IMR-90 (cell line): ENCODE measurements at regions of chr16 and their contacts with region 1.

Region 1: GRCh38 chr16:19886073-19886941 is 1.7 kb upstream of the GPRC5B start:
- DNase-seq: peak; percentile 75
- ATAC-seq: peak; percentile 62
- H3K4me3 ChIP-seq: no peak overlapping the region; the same call in 1 of the 2 replicates
- H3K27ac ChIP-seq: no peak overlapping the region
- H3K4me1 ChIP-seq: peaks cover 5% of the 10 kb centered on the region; the same call in 1 of the 2 replicates
- H3K27me3 ChIP-seq: peaks cover 14% of the 10 kb centered on the region
- CTCF ChIP-seq: peak; percentile 99
- POLR2A ChIP-seq: peak; percentile 60
- RAD21 ChIP-seq: peak; percentile 100

Region 2: GRCh38 chr16:19113453-19114351 is 772.6 kb before region 1 on chr16 and contains the start of gene ITPRIPL2:
- CTCF ChIA-PET with region 1: no interaction called
- POLR2A ChIA-PET with region 1: no interaction called
- dilution Hi-C with region 1: no loop called
- in situ Hi-C with region 1: loop called (anchors 25 kb)
- intact Hi-C with region 1: no loop called
- DNase-seq: peak; percentile 85
- ATAC-seq: peak; percentile 88
- H3K4me3 ChIP-seq: peak within 1 kb of the TSS; percentile 69
- H3K27ac ChIP-seq: peak within 1 kb of the TSS; percentile 95
- H3K4me1 ChIP-seq: peaks cover 26% of the 10 kb centered on the region
- H3K27me3 ChIP-seq: no peaks in the 10 kb centered on the region
- CTCF ChIP-seq: no peak
- POLR2A ChIP-seq: peak; percentile 77
- RAD21 ChIP-seq: no peak
- total RNA-seq, gene ITPRIPL2: 11.1 and 15.0 TPM in 2 replicates

Region 3: GRCh38 chr16:19601083-19601976 is 285.0 kb before region 1 on chr16:
- CTCF ChIA-PET with region 1: interaction called, 5 read pairs
- POLR2A ChIA-PET with region 1: no interaction called
- dilution Hi-C with region 1: loop called (anchors 25 kb)
- in situ Hi-C with region 1: loop called (anchors 5 kb)
- intact Hi-C with region 1: loop called (anchors 1 kb)
- DNase-seq: peak; percentile 36
- ATAC-seq: peak; percentile 57
- H3K4me3 ChIP-seq: no peak overlapping the region
- H3K27ac ChIP-seq: no peak overlapping the region
- H3K4me1 ChIP-seq: no peaks in the 10 kb centered on the region
- H3K27me3 ChIP-seq: no peaks in the 10 kb centered on the region
- CTCF ChIP-seq: peak; percentile 67
- POLR2A ChIP-seq: no peak
- RAD21 ChIP-seq: peak; percentile 75

Region 4: DNA sequence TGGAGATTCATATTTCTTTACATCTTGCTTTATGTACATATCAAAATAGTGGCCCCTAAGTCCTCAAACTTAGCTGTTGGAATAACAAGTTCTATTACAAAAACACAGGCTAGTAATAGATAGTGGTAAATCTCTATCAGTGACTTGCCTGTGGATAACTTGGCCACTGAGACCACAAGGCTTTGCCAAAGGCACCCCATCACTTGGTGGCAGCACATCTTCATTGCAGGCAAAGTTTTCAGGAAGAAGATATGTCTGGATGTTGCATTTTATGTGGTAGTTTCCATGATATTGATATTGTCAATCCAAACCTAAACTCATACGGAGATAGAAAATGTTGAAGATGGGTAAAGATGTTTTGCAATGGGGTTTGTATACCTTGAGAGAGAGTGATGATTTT is 226.8 kb before region 1 on chr16:
- CTCF ChIA-PET with region 1: no interaction called
- POLR2A ChIA-PET with region 1: no interaction called
- dilution Hi-C with region 1: no loop called
- in situ Hi-C with region 1: no loop called
- intact Hi-C with region 1: loop called (anchors 5 kb)
- DNase-seq: peak; percentile 8
- ATAC-seq: no peak
- H3K4me3 ChIP-seq: no peak overlapping the region
- H3K27ac ChIP-seq: no peak overlapping the region
- H3K4me1 ChIP-seq: no peaks in the 10 kb centered on the region
- H3K27me3 ChIP-seq: no peaks in the 10 kb centered on the region
- CTCF ChIP-seq: no peak
- POLR2A ChIP-seq: no peak
- RAD21 ChIP-seq: peak; percentile 23; the same call in 1 of the 2 replicates

Region 5: DNA sequence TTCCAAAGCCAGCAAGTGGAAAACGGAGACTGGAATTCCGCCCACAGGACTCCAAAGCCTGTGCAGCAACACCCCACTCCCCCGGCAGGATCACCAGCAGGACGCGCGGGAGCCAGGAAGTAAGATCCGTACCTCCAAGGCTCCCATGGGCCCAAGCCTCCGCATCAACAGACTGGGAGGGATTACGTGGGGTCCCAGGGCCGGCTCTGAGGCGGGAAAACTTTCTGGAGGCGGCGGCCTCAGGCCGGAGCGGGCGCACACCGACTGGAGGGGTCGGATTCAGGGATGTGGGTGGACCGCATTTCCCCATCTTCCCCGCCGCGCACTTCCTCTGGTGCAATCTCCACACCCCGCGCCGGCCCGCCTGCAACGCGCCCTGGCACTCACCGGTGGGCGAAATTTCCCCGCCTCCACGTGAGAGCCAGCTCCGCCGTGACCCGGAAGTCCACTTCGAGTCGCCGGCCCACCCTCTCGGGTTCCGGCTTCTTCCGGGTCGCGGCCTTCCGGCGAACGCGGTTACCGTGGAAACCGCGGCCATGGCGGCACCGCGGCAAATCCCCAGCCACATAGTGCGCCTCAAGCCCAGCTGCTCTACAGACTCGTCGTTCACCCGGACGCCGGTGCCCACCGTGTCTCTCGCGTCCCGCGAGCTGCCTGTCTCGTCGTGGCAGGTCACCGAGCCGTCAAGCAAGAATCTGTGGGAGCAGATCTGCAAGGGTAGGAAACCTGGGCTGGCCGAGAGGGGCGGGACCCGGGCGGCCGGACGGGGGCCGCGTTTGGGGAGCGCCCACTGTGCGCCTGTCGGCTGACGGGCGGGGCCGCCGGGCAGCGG is 168.3 kb before region 1 on chr16 and contains the starts of genes IQCK and KNOP1:
- CTCF ChIA-PET with region 1: no interaction called
- POLR2A ChIA-PET with region 1: interaction called, 7 read pairs
- dilution Hi-C with region 1: no loop called
- in situ Hi-C with region 1: loop called (anchors 5 kb)
- intact Hi-C with region 1: loop called (anchors 1 kb)
- DNase-seq: peak; percentile 87
- ATAC-seq: peak; percentile 92
- H3K4me3 ChIP-seq: peak within 1 kb of the TSS; percentile 97
- H3K27ac ChIP-seq: peak within 1 kb of the TSS; percentile 86
- H3K4me1 ChIP-seq: peaks cover 6% of the 10 kb centered on the region; the same call in 1 of the 2 replicates
- H3K27me3 ChIP-seq: no peaks in the 10 kb centered on the region
- CTCF ChIP-seq: 0 out of 2 replicates have a peak, but pooled peaks have one; percentile 16
- POLR2A ChIP-seq: no peak; the same call in 1 of the 2 replicates
- RAD21 ChIP-seq: 0 out of 2 replicates have a peak, but pooled peaks have one; percentile 7
- total RNA-seq, gene IQCK: 4.2 and 5.4 TPM in 2 replicates
- total RNA-seq, gene KNOP1: 8.4 and 10.6 TPM in 2 replicates

Region 6: DNA sequence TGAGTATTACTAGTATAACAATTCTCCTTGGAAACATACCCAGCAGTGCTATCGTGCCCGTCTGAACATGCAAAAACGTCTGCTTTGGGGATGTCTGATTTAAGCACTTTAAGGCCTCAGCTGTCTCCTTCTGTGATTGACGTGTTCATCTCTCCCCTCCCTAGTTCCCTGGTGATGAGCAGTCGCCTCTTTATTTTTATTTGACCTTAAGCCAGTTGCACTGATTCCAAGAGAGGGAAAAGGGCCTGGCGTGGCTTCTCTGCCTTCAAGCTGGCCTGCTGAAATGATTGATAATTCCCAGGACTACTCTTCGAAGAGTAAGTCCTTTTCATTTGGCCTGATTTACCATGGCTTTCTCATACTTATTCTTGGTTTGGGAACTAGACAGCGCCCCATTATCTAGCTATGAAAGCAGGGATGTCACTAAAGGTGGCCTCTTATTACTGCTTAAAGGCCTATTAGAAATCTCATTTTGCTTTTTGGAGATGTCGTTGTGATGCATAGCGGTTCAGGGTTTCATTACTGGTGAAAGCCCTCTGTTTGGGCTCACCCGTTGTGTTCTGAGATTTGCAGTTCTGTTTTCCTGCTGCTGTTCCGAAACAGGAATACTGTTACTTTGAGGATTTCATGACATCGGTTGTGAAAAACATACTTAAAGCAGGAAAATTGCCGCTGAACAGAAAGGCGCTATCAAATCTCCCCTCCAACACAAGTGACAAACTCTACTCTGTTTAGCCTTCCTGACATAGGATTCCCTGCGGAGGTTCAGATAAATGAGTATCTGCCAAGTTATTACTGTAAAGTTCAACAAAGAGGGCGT is 102.7 kb before region 1 on chr16:
- CTCF ChIA-PET with region 1: no interaction called
- POLR2A ChIA-PET with region 1: no interaction called
- dilution Hi-C with region 1: no loop called
- in situ Hi-C with region 1: no loop called
- intact Hi-C with region 1: no loop called
- DNase-seq: no peak
- ATAC-seq: no peak
- H3K4me3 ChIP-seq: no peak overlapping the region
- H3K27ac ChIP-seq: no peak overlapping the region
- H3K4me1 ChIP-seq: no peaks in the 10 kb centered on the region
- H3K27me3 ChIP-seq: no peaks in the 10 kb centered on the region
- CTCF ChIP-seq: no peak
- POLR2A ChIP-seq: no peak
- RAD21 ChIP-seq: no peak

Region 7: GRCh38 chr16:19853742-19854542 is 32.4 kb before region 1 on chr16:
- CTCF ChIA-PET with region 1: no interaction called
- POLR2A ChIA-PET with region 1: no interaction called
- dilution Hi-C with region 1: no loop called
- in situ Hi-C with region 1: no loop called
- intact Hi-C with region 1: no loop called
- DNase-seq: no peak
- ATAC-seq: no peak
- H3K4me3 ChIP-seq: no peak overlapping the region
- H3K27ac ChIP-seq: no peak overlapping the region
- H3K4me1 ChIP-seq: no peaks in the 10 kb centered on the region
- H3K27me3 ChIP-seq: no peaks in the 10 kb centered on the region
- CTCF ChIP-seq: no peak
- POLR2A ChIP-seq: no peak
- RAD21 ChIP-seq: no peak